ENCODE measurements at regions of chr19 and their contacts with region 1.

Region 1: GRCh38 chr19:55461259-55461973 is at the start of gene ISOC2:
- DNase-seq: peak; percentile 100
- ATAC-seq: peak; percentile 98
- H3K4me3 Mint-ChIP-seq: peak within 1 kb of the TSS; percentile 80
- H3K27ac Mint-ChIP-seq: peak within 1 kb of the TSS; percentile 82
- H3K4me1 Mint-ChIP-seq: peaks cover 14% of the 10 kb centered on the region
- H3K27me3 Mint-ChIP-seq: no peaks in the 10 kb centered on the region
- total RNA-seq, gene ISOC2: 24.3 to 28.0 TPM

Region 2: GRCh38 chr19:55080968-55081772 is 380.2 kb before region 1 on chr19:
- CTCF ChIA-PET with region 1: no interaction called
- POLR2A ChIA-PET with region 1: no interaction called
- intact Hi-C with region 1: loop called in 1 of 2 experiments (anchors 1 kb)
- DNase-seq: peak; percentile 95
- ATAC-seq: peak; percentile 71
- H3K4me3 Mint-ChIP-seq: peak overlapping the region; percentile 69
- H3K27ac Mint-ChIP-seq: peak overlapping the region; percentile 31
- H3K4me1 Mint-ChIP-seq: peaks cover 22% of the 10 kb centered on the region
- H3K27me3 Mint-ChIP-seq: peaks cover 56% of the 10 kb centered on the region

Region 3: DNA sequence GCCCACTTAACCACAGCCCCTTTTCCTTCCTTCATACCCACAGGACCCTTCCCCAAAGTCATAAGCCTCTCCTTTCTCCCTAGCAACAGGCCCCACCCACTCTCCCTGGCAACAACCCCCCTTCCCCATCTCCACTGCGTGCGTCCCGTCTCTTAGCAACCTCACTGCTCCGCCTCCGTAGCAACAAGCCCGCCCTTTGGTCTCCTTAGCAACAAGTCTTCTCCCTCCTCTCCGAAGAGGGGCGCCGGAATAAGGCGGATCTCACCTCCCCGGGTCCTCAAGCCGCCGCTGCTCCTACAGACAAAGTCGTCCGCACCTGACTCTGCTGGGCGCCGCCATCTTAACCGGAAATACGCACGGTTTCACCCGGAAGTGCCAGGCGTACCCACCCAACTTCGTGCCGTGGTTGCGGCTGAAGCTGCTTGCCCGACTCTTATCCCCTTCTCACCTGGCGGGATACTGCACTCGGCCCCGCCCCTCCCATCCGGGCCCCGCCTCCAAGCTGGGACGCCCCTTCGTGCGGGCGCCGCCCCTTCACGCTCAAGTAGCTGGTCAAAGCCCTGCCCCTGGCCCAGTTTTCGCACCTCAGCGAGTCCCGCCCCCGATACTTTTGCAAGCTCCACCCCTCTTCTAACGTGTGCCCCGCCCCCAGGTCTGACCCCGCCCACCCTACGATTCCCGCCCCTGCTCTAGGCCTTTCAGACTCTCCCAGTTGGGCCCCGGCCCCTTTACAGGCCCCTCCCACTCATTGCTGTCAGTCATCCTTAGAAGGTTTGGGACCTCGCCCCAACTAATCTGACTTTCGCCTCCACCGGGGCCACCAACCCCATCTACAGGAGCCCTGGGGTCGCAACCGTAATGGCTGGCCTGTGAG is 181.4 kb before region 1 on chr19 and contains the start of gene HSPBP1:
- CTCF ChIA-PET with region 1: interaction called, 3 read pairs
- POLR2A ChIA-PET with region 1: no interaction called
- intact Hi-C with region 1: loop called in 1 of 2 experiments (anchors 1 kb)
- DNase-seq: peak; percentile 98
- ATAC-seq: peak; percentile 92
- H3K4me3 Mint-ChIP-seq: peak within 1 kb of the TSS; percentile 100
- H3K27ac Mint-ChIP-seq: peak within 1 kb of the TSS; percentile 98
- H3K4me1 Mint-ChIP-seq: peaks cover 24% of the 10 kb centered on the region
- H3K27me3 Mint-ChIP-seq: no peaks in the 10 kb centered on the region
- total RNA-seq, gene HSPBP1: 41.1 to 45.2 TPM

Region 4: DNA sequence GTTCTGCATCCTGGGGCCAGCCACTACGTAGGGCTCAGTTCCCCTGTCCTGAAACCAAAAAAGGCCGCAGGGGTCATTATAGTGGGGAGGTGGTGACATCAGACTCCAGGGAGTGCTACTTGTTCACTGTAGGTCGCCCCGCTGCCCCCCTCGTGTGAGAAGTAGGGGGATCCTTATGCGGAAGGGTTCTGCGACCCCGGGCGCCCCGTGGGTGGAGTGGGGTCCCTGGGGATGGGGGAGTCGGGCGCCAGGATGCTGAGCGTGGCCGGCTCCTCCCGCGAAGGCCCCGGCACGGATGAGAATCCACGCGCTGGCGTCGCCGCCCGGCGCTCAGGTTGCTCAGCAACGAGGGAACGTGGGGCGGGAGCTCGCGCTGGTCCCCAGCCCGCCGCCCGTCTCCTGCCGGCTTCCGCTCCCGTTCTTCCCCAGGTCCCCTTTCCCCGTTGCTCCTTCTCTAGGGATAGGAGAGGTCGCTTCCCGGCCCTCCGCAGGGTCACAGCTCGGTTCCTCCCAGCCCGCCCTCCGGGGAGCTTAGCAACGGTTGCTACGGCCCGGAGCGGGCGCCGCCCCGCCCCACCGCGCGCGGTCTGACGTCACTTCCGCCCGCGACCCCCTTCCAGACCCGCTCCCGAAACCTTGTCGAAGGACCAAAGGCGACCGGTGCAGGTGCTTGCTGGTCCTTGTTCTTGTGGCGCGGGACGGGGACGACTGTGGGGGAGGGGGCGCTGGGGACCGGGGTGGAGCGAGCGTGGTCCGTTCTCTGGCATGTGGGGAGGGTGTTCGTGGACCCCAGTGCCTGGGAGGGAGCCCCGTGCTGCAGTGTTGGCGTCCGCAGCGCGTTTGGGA is 23.4 kb after region 1 on chr19 and contains the start of gene NAT14:
- CTCF ChIA-PET with region 1: interaction called, 3 read pairs
- POLR2A ChIA-PET with region 1: interaction called, 4 read pairs
- intact Hi-C with region 1: loop called in 1 of 2 experiments (anchors 1 kb)
- DNase-seq: peak; percentile 75
- ATAC-seq: peak; percentile 74
- H3K4me3 Mint-ChIP-seq: peak within 1 kb of the TSS; percentile 75
- H3K27ac Mint-ChIP-seq: peak within 1 kb of the TSS; percentile 78
- H3K4me1 Mint-ChIP-seq: peaks cover 21% of the 10 kb centered on the region
- H3K27me3 Mint-ChIP-seq: no peaks in the 10 kb centered on the region
- total RNA-seq, gene NAT14: 8.2 to 14.8 TPM

Region 5: GRCh38 chr19:55605207-55605636 is 143.8 kb after region 1 on chr19:
- CTCF ChIA-PET with region 1: no interaction called
- POLR2A ChIA-PET with region 1: no interaction called
- intact Hi-C with region 1: loop called in 1 of 2 experiments (anchors 1 kb)
- DNase-seq: peak; percentile 100
- ATAC-seq: peak; percentile 87
- H3K4me3 Mint-ChIP-seq: peak overlapping the region; percentile 88
- H3K27ac Mint-ChIP-seq: peak overlapping the region; percentile 96
- H3K4me1 Mint-ChIP-seq: peaks cover 57% of the 10 kb centered on the region
- H3K27me3 Mint-ChIP-seq: no peaks in the 10 kb centered on the region

Region 6: GRCh38 chr19:55615535-55616394 is 154.3 kb after region 1 on chr19:
- CTCF ChIA-PET with region 1: no interaction called
- POLR2A ChIA-PET with region 1: no interaction called
- intact Hi-C with region 1: no loop called
- DNase-seq: no peak
- ATAC-seq: no peak
- H3K4me3 Mint-ChIP-seq: no peak overlapping the region
- H3K27ac Mint-ChIP-seq: no peak overlapping the region
- H3K4me1 Mint-ChIP-seq: peaks cover 21% of the 10 kb centered on the region
- H3K27me3 Mint-ChIP-seq: no peaks in the 10 kb centered on the region

Measured in activated CD4-positive, alpha-beta T cell treated with anti-CD3 and anti-CD28 coated beads for 36 hours (primary cell).